ENCODE measurements at regions of chr21 and their contacts with region 1.

Region 1: GRCh38 chr21:46285761-46286496 is at the start of gene YBEY:
- DNase-seq: peak; percentile 70 to 91 (median 80)
- ATAC-seq: peak; percentile 95
- H3K4me3 ChIP-seq: peak within 1 kb of the TSS; percentile 58
- H3K4me3 Mint-ChIP-seq: peak within 1 kb of the TSS; percentile 89 to 99 (median 98)
- H3K27ac ChIP-seq: peak within 1 kb of the TSS; percentile 86
- H3K27ac Mint-ChIP-seq: peak within 1 kb of the TSS; percentile 92 to 98 (median 97)
- H3K4me1 ChIP-seq: peaks cover 27 to 31% of the 10 kb centered on the region in 2 donors
- H3K4me1 Mint-ChIP-seq: peaks cover 21 to 76% (median 62%) of the 10 kb centered on the region in 7 donors
- H3K27me3 ChIP-seq: no peaks in the 10 kb centered on the region
- H3K27me3 Mint-ChIP-seq: no peaks in the 10 kb centered on the region
- total RNA-seq, gene YBEY: 8.8 to 16.7 (median 15.6) TPM

Region 2: DNA sequence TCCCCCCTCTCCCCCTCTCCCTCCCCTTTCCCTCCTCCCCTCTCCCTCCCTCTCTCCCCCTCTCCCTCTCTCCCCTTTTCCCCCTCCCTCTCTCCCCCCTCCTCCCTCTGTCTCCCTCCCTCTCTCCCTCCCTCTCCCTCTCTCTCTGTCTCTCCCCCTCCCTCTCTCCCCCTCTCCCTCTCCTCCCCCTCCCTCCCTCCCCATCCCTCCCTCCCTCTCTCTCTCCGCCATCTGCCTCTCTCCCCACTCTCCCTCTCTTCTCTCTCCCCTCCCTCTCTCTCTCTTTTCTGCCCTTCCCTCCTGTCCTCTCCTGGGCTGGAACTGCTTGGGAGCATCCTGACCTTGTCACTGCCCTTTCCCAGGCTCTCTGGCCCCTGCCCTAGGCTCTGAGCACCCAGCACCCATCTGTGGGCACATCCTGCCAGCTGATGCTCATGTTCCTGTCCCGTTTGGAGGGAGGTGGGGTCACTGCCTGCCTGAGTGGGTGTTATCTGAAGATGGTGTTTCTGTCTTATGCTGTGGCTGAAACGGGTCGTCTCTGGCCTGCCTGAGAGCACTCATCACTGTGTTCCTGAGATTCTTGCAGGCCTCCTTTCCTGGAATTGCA is 141.4 kb before region 1 on chr21:
- CTCF ChIA-PET with region 1: no interaction called
- POLR2A ChIA-PET with region 1: interaction called, 4 read pairs
- intact Hi-C with region 1: loop called (anchors 1 to 2 kb)
- DNase-seq: no peak
- ATAC-seq: no peak
- H3K4me3 ChIP-seq: no peak overlapping the region
- H3K4me3 Mint-ChIP-seq: peak overlapping the region in 5 of 10 donors; percentile 29 to 89 (median 80)
- H3K27ac ChIP-seq: no peak overlapping the region
- H3K27ac Mint-ChIP-seq: peak overlapping the region in 6 of 9 donors; percentile 33 to 92 (median 59)
- H3K4me1 ChIP-seq: no peaks in the 10 kb centered on the region
- H3K4me1 Mint-ChIP-seq: peaks cover 6 to 13% (median 8%) of the 10 kb centered on the region in 7 donors
- H3K27me3 ChIP-seq: no peaks in the 10 kb centered on the region
- H3K27me3 Mint-ChIP-seq: no peaks in the 10 kb centered on the region

Region 3: GRCh38 chr21:46237474-46237873 is 48.5 kb before region 1 on chr21:
- CTCF ChIA-PET with region 1: no interaction called
- POLR2A ChIA-PET with region 1: no interaction called
- intact Hi-C with region 1: no loop called
- DNase-seq: no peak
- ATAC-seq: no peak
- H3K4me3 ChIP-seq: no peak overlapping the region
- H3K4me3 Mint-ChIP-seq: no peak overlapping the region
- H3K27ac ChIP-seq: no peak overlapping the region
- H3K27ac Mint-ChIP-seq: no peak overlapping the region
- H3K4me1 ChIP-seq: peaks cover 0 to 6% of the 10 kb centered on the region in 2 donors
- H3K4me1 Mint-ChIP-seq: peaks cover 0 to 22% (median 8%) of the 10 kb centered on the region in 7 donors
- H3K27me3 ChIP-seq: no peaks in the 10 kb centered on the region
- H3K27me3 Mint-ChIP-seq: no peaks in the 10 kb centered on the region

Region 4: GRCh38 chr21:46295996-46296752 is 10.2 kb after region 1 on chr21:
- CTCF ChIA-PET with region 1: no interaction called
- POLR2A ChIA-PET with region 1: interaction called, 6 read pairs
- intact Hi-C with region 1: loop called (anchors 1 kb)
- DNase-seq: peak in 8 of 9 donors; percentile 16 to 71 (median 45)
- ATAC-seq: peak; percentile 91
- H3K4me3 ChIP-seq: no peak overlapping the region
- H3K4me3 Mint-ChIP-seq: peak overlapping the region; percentile 2 to 82 (median 65)
- H3K27ac ChIP-seq: peak overlapping the region; percentile 41
- H3K27ac Mint-ChIP-seq: peak overlapping the region in 6 of 9 donors; percentile 52 to 90 (median 82)
- H3K4me1 ChIP-seq: no peaks in the 10 kb centered on the region
- H3K4me1 Mint-ChIP-seq: peaks cover 0 to 22% (median 10%) of the 10 kb centered on the region in 7 donors
- H3K27me3 ChIP-seq: no peaks in the 10 kb centered on the region
- H3K27me3 Mint-ChIP-seq: peaks cover 0 to 6% (median 0%) of the 10 kb centered on the region in 5 donors

Region 5: GRCh38 chr21:46424039-46424591 is 138.2 kb after region 1 on chr21:
- CTCF ChIA-PET with region 1: no interaction called
- POLR2A ChIA-PET with region 1: no interaction called
- intact Hi-C with region 1: loop called in 1 of 2 experiments (anchors 10 kb)
- DNase-seq: peak in 6 of 9 donors; percentile 24 to 48 (median 34)
- ATAC-seq: peak; percentile 45
- H3K4me3 ChIP-seq: peak overlapping the region; percentile 20
- H3K4me3 Mint-ChIP-seq: peak overlapping the region in 9 of 10 donors; percentile 59 to 82 (median 72)
- H3K27ac ChIP-seq: peak overlapping the region; percentile 78
- H3K27ac Mint-ChIP-seq: peak overlapping the region; percentile 65 to 98 (median 91)
- H3K4me1 ChIP-seq: peaks cover 8 to 34% of the 10 kb centered on the region in 2 donors
- H3K4me1 Mint-ChIP-seq: peaks cover 5 to 40% (median 16%) of the 10 kb centered on the region in 7 donors
- H3K27me3 ChIP-seq: no peaks in the 10 kb centered on the region
- H3K27me3 Mint-ChIP-seq: no peaks in the 10 kb centered on the region